Ovary (tissue), 10 donors: ENCODE measurements at regions of chr6 and their contacts with region 1.

Region 1: DNA sequence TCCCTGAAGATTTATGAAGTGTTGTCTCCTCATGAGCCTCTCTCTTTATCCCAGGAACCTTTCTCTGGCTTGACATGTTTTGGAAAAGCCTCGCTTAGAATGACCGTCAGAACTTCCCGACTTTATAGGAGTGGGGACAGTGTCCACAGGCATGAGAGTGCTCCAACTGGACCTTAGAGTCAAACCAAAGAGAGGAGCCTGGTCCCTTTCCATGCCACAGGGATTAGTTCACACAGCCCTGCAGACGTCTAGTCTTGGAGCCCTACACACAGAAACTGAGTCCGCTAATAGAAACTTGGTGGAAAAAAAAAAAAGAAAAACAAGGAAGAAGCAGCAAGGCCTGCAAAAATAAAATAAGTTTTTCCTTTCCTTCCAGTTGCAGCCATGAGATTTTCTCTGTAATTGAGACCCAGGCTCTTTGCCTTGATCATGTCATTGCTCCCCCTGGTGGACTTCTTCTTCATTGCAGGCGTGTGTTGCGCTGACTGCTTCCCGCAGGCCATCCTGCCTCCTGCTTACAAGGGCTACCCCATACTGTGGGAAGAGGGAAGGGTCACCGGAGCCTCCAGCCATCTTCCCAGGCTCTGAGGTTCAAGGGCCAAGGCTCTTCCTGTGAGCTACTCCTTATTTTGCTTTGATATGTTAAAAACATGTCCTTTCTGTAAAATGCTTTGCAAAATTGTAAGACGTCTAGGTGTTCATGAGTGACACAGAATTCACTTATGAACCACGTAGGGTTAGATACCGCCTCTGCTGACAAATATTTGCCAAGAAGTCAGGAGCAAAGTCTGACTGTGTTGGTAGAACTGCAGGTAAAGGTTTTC is 201.0 kb downstream of the UST start:
- DNase-seq: peak; percentile 78 to 88 (median 87)
- H3K4me3 ChIP-seq: no peak overlapping the region
- H3K27ac ChIP-seq: no peak overlapping the region
- H3K4me1 ChIP-seq: peaks cover 6% of the 10 kb centered on the region
- H3K27me3 ChIP-seq: no peaks in the 10 kb centered on the region
- CTCF ChIP-seq: peak; percentile 81 to 84 (median 82)
- EP300 ChIP-seq: no peak
- POLR2A ChIP-seq: no peak

Region 2: DNA sequence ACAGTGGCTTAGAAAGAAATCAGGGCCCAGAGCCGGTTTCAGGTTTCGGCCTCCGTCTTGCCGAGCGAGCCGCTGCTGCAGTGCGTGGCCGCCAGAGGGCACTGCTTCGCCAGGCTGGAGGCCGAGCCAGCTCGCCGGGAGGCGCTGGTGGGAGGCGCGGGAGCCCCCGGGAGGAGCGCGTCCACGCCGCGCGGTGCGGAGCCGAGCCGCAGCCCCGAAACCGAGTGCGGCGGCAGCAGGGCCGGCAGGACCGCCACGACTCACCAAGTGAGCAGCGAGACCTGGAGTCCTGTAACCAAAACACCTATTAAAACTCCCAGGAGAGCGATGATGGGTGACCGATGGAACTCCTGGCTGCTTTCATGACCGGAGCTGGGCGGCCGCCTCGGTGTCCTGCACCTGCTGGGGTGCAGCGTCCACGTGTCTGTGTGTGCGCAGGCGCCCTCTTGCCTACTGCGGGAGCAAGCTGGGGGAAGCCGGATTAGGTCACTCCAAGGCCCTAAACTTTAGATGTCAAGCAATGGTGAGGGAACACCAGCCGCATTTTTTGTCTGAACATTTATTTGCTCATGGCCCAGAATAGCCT is 387.9 kb before region 1 on chr6:
- intact Hi-C with region 1: loop called in 1 of 4 experiments (anchors 5 kb)
- DNase-seq: peak; percentile 78 to 89 (median 83)
- H3K4me3 ChIP-seq: peak overlapping the region; percentile 47
- H3K27ac ChIP-seq: no peak overlapping the region
- H3K4me1 ChIP-seq: peaks cover 1% of the 10 kb centered on the region
- H3K27me3 ChIP-seq: no peaks in the 10 kb centered on the region
- CTCF ChIP-seq: peak; percentile 90 to 93 (median 91)
- EP300 ChIP-seq: no peak
- POLR2A ChIP-seq: no peak

Region 3: GRCh38 chr6:148578245-148578732 is 369.5 kb before region 1 on chr6:
- intact Hi-C with region 1: loop called in 3 of 4 experiments (anchors 5 to 10 kb)
- DNase-seq: peak; percentile 69 to 82 (median 77)
- H3K4me3 ChIP-seq: no peak overlapping the region
- H3K27ac ChIP-seq: no peak overlapping the region
- H3K4me1 ChIP-seq: no peaks in the 10 kb centered on the region
- H3K27me3 ChIP-seq: no peaks in the 10 kb centered on the region
- CTCF ChIP-seq: peak; percentile 66 to 86 (median 71)
- EP300 ChIP-seq: no peak
- POLR2A ChIP-seq: no peak

Region 4: GRCh38 chr6:148746363-148747144 is 201.3 kb before region 1 on chr6 and contains the start of gene UST:
- intact Hi-C with region 1: loop called (anchors 5 to 10 kb)
- DNase-seq: peak; percentile 86 to 92 (median 90)
- H3K4me3 ChIP-seq: peak within 1 kb of the TSS; percentile 88
- H3K27ac ChIP-seq: peak within 1 kb of the TSS; percentile 64 to 87
- H3K4me1 ChIP-seq: peaks cover 1% of the 10 kb centered on the region
- H3K27me3 ChIP-seq: no peaks in the 10 kb centered on the region
- CTCF ChIP-seq: peak in 1 of 3 donors; percentile 22
- EP300 ChIP-seq: no peak
- POLR2A ChIP-seq: peak; percentile 54
- total RNA-seq, gene UST: 12.3 to 19.3 (median 16.5) TPM

Region 5: GRCh38 chr6:149043476-149044130 is 95.8 kb after region 1 on chr6:
- intact Hi-C with region 1: no loop called
- DNase-seq: no peak
- H3K4me3 ChIP-seq: no peak overlapping the region
- H3K27ac ChIP-seq: no peak overlapping the region
- H3K4me1 ChIP-seq: peaks cover 1% of the 10 kb centered on the region
- H3K27me3 ChIP-seq: no peaks in the 10 kb centered on the region
- CTCF ChIP-seq: no peak
- EP300 ChIP-seq: no peak
- POLR2A ChIP-seq: no peak